ENCODE measurements at regions of chr10 and their contacts with region 1.

Region 1: DNA sequence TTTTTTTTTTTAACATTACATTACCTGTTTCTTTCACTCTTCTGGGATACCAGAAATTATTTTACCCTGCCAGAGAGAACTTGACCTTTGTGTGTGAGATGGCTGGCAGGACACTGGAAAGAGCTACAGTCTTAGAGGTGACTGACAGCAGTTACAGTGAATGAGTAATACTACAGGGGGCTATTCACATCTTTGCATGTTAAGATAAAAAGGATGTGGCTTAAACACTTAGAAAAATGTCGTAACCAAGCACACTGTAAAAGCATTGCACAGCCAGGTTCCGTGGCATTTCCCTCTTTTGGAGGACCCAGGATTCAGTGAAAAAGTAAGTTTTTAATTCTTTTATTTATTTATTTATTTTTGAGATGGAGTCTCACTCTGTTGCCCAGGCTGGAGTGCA is 18.8 kb upstream of the TBC1D12 start:
- DNase-seq: no peak
- ATAC-seq: no peak
- H3K4me3 ChIP-seq: no peak overlapping the region
- H3K4me3 Mint-ChIP-seq: no peak overlapping the region
- H3K27ac ChIP-seq: no peak overlapping the region
- H3K27ac Mint-ChIP-seq: no peak overlapping the region
- H3K4me1 ChIP-seq: no peaks in the 10 kb centered on the region
- H3K4me1 Mint-ChIP-seq: no peaks in the 10 kb centered on the region
- H3K27me3 ChIP-seq: peaks cover 0 to 3% of the 10 kb centered on the region in 2 experiments
- H3K27me3 Mint-ChIP-seq: peaks cover 6 to 8% of the 10 kb centered on the region in 2 donors

Region 2: DNA sequence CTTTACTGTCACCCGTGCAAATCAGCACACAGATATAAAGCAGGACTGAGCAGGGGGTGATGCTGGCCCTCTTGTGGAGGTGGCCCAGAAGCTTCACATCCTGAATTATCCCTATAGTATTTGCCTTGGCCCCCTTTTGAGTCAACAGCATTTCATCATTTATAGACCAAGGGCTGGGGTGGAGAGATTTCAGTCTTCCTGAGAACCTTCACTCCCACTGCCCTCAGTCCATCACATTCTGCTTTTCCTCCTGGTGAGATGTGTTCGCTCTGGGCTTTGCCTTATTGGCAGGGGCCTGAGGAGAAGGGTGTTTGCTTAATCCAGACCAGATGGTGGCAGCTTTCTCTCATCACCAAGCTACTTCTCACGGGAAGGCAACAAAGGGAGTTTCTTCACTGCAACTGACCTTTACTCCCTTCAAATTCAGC is 68.5 kb before region 1 on chr10:
- CTCF ChIA-PET with region 1: no interaction called
- POLR2A ChIA-PET with region 1: no interaction called
- DNase-seq: no peak
- ATAC-seq: no peak
- H3K4me3 ChIP-seq: no peak overlapping the region
- H3K4me3 Mint-ChIP-seq: no peak overlapping the region
- H3K27ac ChIP-seq: no peak overlapping the region
- H3K27ac Mint-ChIP-seq: no peak overlapping the region
- H3K4me1 ChIP-seq: no peaks in the 10 kb centered on the region
- H3K4me1 Mint-ChIP-seq: no peaks in the 10 kb centered on the region
- H3K27me3 ChIP-seq: no peaks in the 10 kb centered on the region
- H3K27me3 Mint-ChIP-seq: peaks cover 12 to 20% of the 10 kb centered on the region in 2 donors

Region 3: GRCh38 chr10:94397549-94398370 is 14.2 kb after region 1 on chr10:
- CTCF ChIA-PET with region 1: no interaction called
- POLR2A ChIA-PET with region 1: interaction called in 1 of 2 experiments, 11 read pairs
- DNase-seq: no peak
- ATAC-seq: no peak
- H3K4me3 ChIP-seq: no peak overlapping the region
- H3K4me3 Mint-ChIP-seq: no peak overlapping the region
- H3K27ac ChIP-seq: no peak overlapping the region
- H3K27ac Mint-ChIP-seq: no peak overlapping the region
- H3K4me1 ChIP-seq: peaks cover 0 to 7% of the 10 kb centered on the region in 2 experiments
- H3K4me1 Mint-ChIP-seq: peaks cover 0 to 4% (median 3%) of the 10 kb centered on the region in 3 donors
- H3K27me3 ChIP-seq: peaks cover 2 to 20% of the 10 kb centered on the region in 2 experiments
- H3K27me3 Mint-ChIP-seq: peaks cover 32 to 40% of the 10 kb centered on the region in 2 donors